HEK293 (cell line): ENCODE measurements at regions of chr14 and their contacts with region 1.

Region 1: GRCh38 chr14:88189417-88190191 is 133.5 kb downstream of the KCNK10 start:
- H3K4me3 ChIP-seq: peak overlapping the region; percentile 22
- H3K27ac ChIP-seq: no peak overlapping the region
- H3K4me1 ChIP-seq: peaks cover 2% of the 10 kb centered on the region
- CTCF ChIP-seq: peak; percentile 58; the same call in 1 of the 2 replicates

Region 2: DNA sequence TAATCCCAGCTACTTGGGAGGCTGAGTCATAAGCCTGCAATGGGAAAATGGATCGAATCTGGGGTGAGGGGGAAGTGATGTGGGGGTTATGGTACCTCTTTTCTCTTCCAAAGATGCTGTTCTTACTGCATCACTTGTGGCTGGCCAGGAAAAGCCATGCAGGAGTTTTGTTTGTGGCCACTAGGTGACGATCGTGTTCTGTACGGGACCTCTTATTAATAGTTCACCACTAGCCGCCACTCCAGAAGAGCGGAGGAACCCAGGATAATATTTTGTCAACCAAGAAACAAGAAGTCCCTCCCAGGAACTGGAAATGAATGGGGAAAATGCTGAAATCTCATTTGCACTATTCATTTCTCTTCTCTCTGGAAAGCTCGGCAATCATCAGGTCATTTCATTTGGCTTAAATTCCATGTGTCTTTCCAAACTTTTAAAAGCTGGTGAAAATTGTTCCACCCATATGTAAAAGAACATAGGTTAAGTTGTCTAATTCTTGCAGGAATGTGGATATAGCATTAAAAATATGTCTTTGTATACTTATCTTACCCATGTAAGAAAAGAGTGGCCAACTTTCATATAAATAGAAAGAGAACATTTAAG is 175.8 kb before region 1 on chr14:
- CTCF ChIA-PET with region 1: interaction called, 22 read pairs
- POLR2A ChIA-PET with region 1: no interaction called
- H3K4me3 ChIP-seq: no peak overlapping the region
- H3K27ac ChIP-seq: no peak overlapping the region
- H3K4me1 ChIP-seq: no peaks in the 10 kb centered on the region
- CTCF ChIP-seq: peak; percentile 38; the same call in 1 of the 2 replicates

Region 3: DNA sequence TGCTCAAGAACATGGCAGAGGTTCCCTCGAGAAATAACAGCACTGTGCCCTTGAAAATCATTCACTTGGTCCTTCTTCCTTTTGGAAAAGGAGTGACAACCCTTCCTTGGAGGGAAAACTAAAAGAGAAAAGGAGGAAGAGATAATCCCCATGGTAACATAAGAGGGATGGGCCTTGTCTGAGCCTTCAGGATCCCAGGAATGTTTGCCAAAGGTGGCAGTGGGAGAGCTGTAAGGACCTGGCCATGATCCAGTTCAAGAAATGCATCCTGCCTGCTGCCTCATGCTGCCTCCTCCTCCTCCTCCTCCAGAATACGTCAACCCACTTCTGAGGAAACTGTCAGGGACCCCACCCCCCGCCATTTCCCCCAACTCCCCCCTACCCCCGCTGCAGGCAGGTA is 14.6 kb after region 1 on chr14:
- CTCF ChIA-PET with region 1: interaction called, 16 read pairs
- POLR2A ChIA-PET with region 1: no interaction called
- H3K4me3 ChIP-seq: no peak overlapping the region
- H3K27ac ChIP-seq: no peak overlapping the region
- H3K4me1 ChIP-seq: no peaks in the 10 kb centered on the region
- CTCF ChIP-seq: no peak

Region 4: DNA sequence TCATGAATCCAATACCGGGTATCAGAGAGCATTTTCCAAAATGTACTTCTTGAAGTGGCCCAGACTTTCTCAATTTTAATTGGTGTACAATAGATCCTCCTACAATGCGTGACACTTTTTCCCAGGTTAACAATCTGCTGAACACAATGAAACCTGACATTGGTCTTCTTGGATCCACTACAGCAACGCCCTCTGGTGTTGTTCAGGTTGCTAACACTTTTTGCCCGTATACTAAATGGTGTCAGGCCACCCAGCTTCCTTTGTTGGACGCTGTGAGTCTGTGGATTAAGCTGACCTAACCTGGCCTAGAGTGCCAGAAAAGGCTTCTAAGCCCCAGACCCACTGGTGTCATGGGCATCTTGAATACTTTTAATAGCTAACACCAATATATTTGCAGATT is 44.3 kb after region 1 on chr14:
- CTCF ChIA-PET with region 1: interaction called, 58 read pairs
- POLR2A ChIA-PET with region 1: no interaction called
- H3K4me3 ChIP-seq: no peak overlapping the region
- H3K27ac ChIP-seq: no peak overlapping the region
- H3K4me1 ChIP-seq: no peaks in the 10 kb centered on the region
- CTCF ChIP-seq: no peak

Region 5: DNA sequence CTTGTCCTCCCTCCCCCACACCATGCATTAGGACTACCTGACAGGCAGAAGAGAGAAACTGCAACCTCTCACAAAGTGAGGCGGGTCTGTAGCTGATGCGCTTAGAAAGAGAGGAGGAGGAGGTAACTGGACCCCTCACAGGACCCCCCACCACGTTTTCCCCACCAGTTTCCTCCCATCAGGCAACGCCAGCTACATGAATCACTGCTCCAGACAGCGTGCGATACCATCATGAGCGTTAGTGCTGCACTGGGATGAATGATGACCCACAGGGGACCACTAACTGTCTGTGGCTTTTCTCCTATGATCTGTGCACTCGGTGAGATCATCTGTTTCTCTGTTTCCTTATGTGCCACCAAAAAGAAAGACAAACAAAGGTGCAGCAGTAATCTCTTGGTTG is 55.7 kb after region 1 on chr14:
- CTCF ChIA-PET with region 1: interaction called, 14 read pairs
- POLR2A ChIA-PET with region 1: no interaction called
- H3K4me3 ChIP-seq: no peak overlapping the region
- H3K27ac ChIP-seq: no peak overlapping the region
- H3K4me1 ChIP-seq: peaks cover 7% of the 10 kb centered on the region
- CTCF ChIP-seq: no peak

Region 6: DNA sequence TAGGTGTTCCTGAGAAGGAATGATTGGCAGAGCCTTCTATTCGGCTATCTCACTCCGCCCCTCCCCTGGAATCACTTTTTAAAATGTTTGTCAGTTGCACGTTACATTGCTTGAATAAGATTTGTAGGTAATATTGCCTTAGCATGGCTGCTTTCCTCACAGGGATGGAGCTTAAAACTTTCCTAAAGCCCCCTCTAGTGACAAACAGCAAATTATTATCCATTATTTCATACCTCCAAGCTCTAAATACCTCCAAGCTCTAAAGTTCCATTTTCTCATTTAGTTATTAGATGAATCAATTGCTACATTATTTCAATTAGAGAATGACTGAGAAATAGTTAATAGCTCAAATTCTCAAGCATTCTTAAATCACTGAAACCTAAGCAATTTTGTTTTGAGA is 190.8 kb after region 1 on chr14:
- CTCF ChIA-PET with region 1: interaction called, 29 read pairs
- POLR2A ChIA-PET with region 1: no interaction called
- H3K4me3 ChIP-seq: no peak overlapping the region
- H3K27ac ChIP-seq: no peak overlapping the region
- H3K4me1 ChIP-seq: no peaks in the 10 kb centered on the region
- CTCF ChIP-seq: no peak

Region 7: GRCh38 chr14:88392609-88393008 is 203.0 kb after region 1 on chr14:
- CTCF ChIA-PET with region 1: interaction called, 10 read pairs
- POLR2A ChIA-PET with region 1: no interaction called
- H3K4me3 ChIP-seq: no peak overlapping the region
- H3K27ac ChIP-seq: no peak overlapping the region
- H3K4me1 ChIP-seq: no peaks in the 10 kb centered on the region
- CTCF ChIP-seq: no peak